Prostate gland (tissue), 2 donors: ENCODE measurements at regions of chr13 and their contacts with region 1.

Region 1: DNA sequence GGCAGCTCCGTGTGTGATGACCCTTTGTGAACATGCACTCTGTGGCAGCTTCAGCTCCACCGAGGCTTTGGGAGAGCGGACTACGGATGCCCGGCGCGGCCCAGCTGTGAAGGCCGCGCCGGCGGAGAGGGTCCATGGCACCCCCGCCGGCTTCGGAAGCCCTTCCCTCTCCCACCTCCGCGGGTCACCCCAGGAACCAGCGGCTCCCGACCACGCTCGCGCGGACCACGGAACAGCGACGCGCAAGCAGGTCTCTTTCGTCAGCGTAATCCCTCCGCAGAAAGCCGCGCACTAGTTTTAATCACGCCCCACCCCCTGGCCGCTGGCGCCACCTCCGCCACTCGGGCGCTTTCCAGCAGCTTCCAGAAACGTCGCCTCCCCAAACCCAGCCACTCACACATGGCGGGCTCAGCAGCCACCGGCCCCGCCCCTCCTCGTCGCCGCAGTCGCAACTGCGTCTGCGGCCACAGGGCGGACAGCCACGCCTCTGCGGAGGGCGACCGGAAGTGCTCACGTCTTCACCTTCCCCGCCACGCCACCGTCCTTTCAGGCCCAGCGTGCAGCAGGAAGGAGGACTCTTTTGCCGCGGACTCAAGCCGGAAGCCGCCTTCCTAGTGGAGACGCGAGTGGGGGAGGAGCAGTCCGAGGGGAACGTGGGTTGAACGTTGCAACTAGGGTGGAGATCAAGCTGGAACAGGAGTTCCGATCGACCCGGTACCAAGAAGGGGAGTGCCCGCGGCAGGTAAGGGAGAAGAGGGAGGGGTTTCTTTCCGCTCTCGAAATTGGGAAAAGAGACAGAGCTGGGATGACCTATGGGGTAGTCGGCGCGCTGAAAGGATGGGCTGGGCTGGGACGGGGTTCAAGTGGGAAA is at the start of gene USPL1:
- DNase-seq: peak; percentile 97
- H3K4me3 ChIP-seq: peak within 1 kb of the TSS; percentile 61 to 68
- H3K27ac ChIP-seq: peak within 1 kb of the TSS; percentile 100
- H3K4me1 ChIP-seq: no peaks in the 10 kb centered on the region
- H3K27me3 ChIP-seq: no peaks in the 10 kb centered on the region
- CTCF ChIP-seq: peak in 3 of 4 experiments; percentile 26 to 91 (median 74)
- POLR2A ChIP-seq: peak; percentile 96
- total RNA-seq, gene USPL1: 20.1 to 24.4 TPM

Region 2: GRCh38 chr13:30257468-30258099 is 360.0 kb before region 1 on chr13:
- intact Hi-C with region 1: loop called (anchors 10 kb)
- DNase-seq: no peak
- H3K4me3 ChIP-seq: no peak overlapping the region
- H3K27ac ChIP-seq: peak overlapping the region; percentile 27 to 29
- H3K4me1 ChIP-seq: peaks cover 4% of the 10 kb centered on the region
- H3K27me3 ChIP-seq: no peaks in the 10 kb centered on the region
- CTCF ChIP-seq: no peak
- POLR2A ChIP-seq: no peak

Region 3: GRCh38 chr13:30408319-30409101 is 209.0 kb before region 1 on chr13:
- intact Hi-C with region 1: loop called (anchors 5 kb)
- DNase-seq: peak; percentile 94
- H3K4me3 ChIP-seq: peak overlapping the region; percentile 15 to 29
- H3K27ac ChIP-seq: peak overlapping the region; percentile 87 to 90
- H3K4me1 ChIP-seq: peaks cover 7% of the 10 kb centered on the region
- H3K27me3 ChIP-seq: no peaks in the 10 kb centered on the region
- CTCF ChIP-seq: peak; percentile 84 to 98 (median 88)
- POLR2A ChIP-seq: peak; percentile 29

Region 4: DNA sequence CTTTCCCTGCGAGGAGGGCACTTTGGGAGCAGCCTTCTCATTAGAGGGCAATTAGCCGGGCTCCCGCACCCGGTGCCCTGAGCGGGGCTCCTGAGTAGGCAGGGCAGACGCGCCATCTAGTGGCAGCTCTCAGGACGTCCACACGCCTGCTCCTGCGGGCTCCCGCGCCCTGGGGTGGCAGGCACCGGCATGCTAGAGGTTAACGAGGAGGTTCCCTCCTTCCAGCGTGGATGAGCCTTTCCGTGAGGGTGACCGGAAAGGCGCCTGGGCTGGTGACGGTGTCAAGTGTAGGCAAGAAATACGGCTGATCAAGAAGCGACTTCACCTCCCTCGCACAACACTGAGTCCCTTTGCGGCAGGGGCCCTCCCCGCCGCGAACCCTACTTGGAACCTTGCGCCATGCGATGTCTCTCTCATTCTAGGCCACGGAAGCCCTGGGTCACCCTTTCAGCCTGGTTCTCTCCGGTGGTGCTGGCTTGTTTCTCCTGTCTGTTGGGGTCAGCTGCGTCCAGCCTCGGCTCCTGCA is 185.5 kb after region 1 on chr13:
- intact Hi-C with region 1: loop called (anchors 5 kb)
- DNase-seq: peak; percentile 83
- H3K4me3 ChIP-seq: peak overlapping the region; percentile 15 to 30
- H3K27ac ChIP-seq: peak overlapping the region; percentile 45 to 57
- H3K4me1 ChIP-seq: no peaks in the 10 kb centered on the region
- H3K27me3 ChIP-seq: no peaks in the 10 kb centered on the region
- CTCF ChIP-seq: peak; percentile 86 to 96 (median 92)
- POLR2A ChIP-seq: no peak